ENCODE measurements at regions of chr11 and their contacts with region 1.

Region 1: GRCh38 chr11:3091791-3092602 is 34.8 kb upstream of the CARS1 start:
- DNase-seq: peak; percentile 60
- H3K4me3 Mint-ChIP-seq: no peak overlapping the region
- H3K27ac Mint-ChIP-seq: no peak overlapping the region
- H3K4me1 Mint-ChIP-seq: no peaks in the 10 kb centered on the region
- H3K27me3 Mint-ChIP-seq: no peaks in the 10 kb centered on the region

Region 2: DNA sequence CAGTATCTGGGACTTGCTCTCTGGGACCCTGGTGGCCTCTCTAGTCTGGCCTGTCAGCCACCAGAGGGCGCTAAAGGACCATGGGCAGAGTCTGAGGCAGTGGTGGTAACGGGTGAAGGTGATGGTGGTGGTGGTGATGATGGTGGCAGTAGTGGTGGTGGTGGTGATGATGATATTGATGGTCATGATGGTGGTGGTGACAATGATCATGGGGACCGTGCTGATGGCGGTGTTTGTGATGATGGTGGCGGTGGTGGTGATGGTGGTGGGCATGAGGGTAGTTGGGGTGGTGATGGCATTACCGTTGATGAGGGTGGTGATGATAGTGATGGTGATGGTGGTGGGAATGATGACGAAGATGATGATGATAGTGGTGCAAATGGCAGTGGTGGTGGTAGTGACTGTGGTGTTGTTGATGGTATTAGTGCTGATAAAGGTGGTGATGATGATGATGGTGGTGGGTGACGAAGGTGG is 663.6 kb before region 1 on chr11:
- intact Hi-C with region 1: loop called (anchors 5 kb)
- DNase-seq: peak; percentile 67
- H3K4me3 Mint-ChIP-seq: no peak overlapping the region
- H3K27ac Mint-ChIP-seq: no peak overlapping the region
- H3K4me1 Mint-ChIP-seq: no peaks in the 10 kb centered on the region
- H3K27me3 Mint-ChIP-seq: no peaks in the 10 kb centered on the region

Region 3: DNA sequence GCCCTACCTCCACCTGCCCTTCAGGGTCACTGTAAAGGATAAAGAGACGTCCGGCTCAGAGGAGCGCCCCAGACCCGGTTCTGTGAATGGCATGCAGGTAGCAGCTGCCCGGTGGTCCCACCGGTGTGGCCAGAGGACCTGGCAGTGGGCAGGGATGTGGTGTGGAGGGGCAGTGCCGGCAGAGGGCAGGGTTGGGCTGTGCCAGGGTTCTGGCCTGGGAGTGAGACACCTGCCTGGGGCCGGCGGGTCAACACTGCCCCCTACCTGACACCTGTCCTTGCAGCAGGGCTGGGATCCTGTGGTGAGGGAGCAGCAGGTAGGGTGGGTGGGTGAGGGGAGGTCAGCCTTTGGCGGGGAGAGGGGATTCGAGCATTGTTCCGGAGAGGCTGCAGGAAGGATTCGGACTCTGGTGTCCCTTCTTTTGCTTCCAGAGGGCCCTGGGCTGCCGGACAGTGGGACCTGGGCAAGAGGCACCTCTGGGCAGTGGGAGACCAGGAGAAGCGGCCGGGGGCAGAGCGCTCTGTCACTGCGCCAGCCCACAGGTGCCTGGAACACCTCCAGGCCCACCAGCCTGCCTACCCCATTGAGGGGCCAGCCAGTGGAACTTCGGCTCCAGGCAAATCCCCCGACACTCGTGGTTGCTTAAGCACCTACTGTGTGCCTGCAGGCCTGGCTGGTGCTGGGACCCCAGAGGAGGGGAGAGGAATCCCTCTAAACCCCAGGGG is 161.1 kb before region 1 on chr11:
- intact Hi-C with region 1: loop called (anchors 2 kb)
- DNase-seq: no peak
- H3K4me3 Mint-ChIP-seq: peak overlapping the region; percentile 78
- H3K27ac Mint-ChIP-seq: peak overlapping the region; percentile 77
- H3K4me1 Mint-ChIP-seq: peaks cover 15% of the 10 kb centered on the region
- H3K27me3 Mint-ChIP-seq: peaks cover 12% of the 10 kb centered on the region

Region 4: GRCh38 chr11:2975594-2975993 is 116.4 kb before region 1 on chr11:
- intact Hi-C with region 1: loop called (anchors 1 kb)
- DNase-seq: peak; percentile 14
- H3K4me3 Mint-ChIP-seq: no peak overlapping the region
- H3K27ac Mint-ChIP-seq: no peak overlapping the region
- H3K4me1 Mint-ChIP-seq: peaks cover 29% of the 10 kb centered on the region
- H3K27me3 Mint-ChIP-seq: no peaks in the 10 kb centered on the region

Region 5: DNA sequence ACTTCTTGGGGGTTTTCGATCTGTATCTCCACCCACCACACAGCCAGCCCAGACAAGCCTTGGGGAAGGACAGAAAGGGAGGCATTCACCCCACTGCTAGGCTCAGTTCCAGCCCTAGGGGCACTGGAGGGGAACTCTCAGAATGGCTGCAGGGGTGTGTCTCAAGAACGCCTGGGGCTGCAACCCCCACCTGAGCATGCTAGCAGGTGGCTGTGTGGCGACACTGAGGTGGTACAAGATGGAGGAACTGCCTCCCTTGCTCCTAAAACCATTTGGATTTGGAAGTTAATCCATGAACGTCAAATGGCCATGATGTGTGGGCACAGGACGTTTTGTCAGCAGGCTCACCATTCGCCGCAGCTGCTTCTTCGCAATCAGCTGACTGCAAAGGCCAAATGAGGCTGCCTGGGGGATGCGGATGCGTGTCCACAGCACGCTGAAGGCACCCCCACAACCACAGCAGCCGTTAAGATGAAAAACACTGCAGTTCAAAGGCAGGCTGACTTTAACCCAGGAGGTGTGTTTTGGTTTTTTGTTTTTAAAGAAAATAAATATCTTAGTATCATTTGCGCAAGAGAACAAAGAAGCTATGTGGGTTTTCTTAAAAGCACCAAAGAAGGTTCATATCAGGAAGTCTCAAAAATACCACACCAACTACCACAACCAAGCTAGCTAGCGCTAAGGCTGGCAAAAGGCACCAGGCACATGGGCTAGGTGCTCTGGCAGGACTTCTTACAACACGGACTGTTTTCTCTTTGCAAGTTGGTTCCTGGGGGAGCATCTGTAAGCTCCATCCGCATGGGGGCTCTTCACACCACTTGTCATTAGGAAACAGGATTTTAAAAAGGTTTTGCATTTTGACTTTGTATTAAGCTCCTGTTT is 77.7 kb before region 1 on chr11:
- intact Hi-C with region 1: no loop called
- DNase-seq: peak; percentile 72
- H3K4me3 Mint-ChIP-seq: peak overlapping the region; percentile 63
- H3K27ac Mint-ChIP-seq: peak overlapping the region; percentile 90
- H3K4me1 Mint-ChIP-seq: peaks cover 41% of the 10 kb centered on the region
- H3K27me3 Mint-ChIP-seq: no peaks in the 10 kb centered on the region

Region 6: GRCh38 chr11:3037040-3037944 is 54.7 kb before region 1 on chr11:
- intact Hi-C with region 1: loop called (anchors 1 kb)
- DNase-seq: peak; percentile 26
- H3K4me3 Mint-ChIP-seq: no peak overlapping the region
- H3K27ac Mint-ChIP-seq: peak overlapping the region; percentile 14
- H3K4me1 Mint-ChIP-seq: no peaks in the 10 kb centered on the region
- H3K27me3 Mint-ChIP-seq: no peaks in the 10 kb centered on the region

Region 7: GRCh38 chr11:3189196-3189843 is 97.3 kb after region 1 on chr11:
- intact Hi-C with region 1: no loop called
- DNase-seq: no peak
- H3K4me3 Mint-ChIP-seq: no peak overlapping the region
- H3K27ac Mint-ChIP-seq: no peak overlapping the region
- H3K4me1 Mint-ChIP-seq: no peaks in the 10 kb centered on the region
- H3K27me3 Mint-ChIP-seq: peaks cover 2% of the 10 kb centered on the region

Region 8: GRCh38 chr11:4523666-4524065 is 1431.7 kb after region 1 on chr11:
- intact Hi-C with region 1: no loop called
- DNase-seq: no peak
- H3K4me3 Mint-ChIP-seq: no peak overlapping the region
- H3K27ac Mint-ChIP-seq: no peak overlapping the region
- H3K4me1 Mint-ChIP-seq: no peaks in the 10 kb centered on the region
- H3K27me3 Mint-ChIP-seq: peaks cover 8% of the 10 kb centered on the region

Measured in activated T-helper 1 cell treated with anti-CD3 and anti-CD28 coated beads, Interleukin-12 subunit alpha, Interleukin-12 subunit beta, Interleukin-2, Interleukin-4 antibody, amounts not matched to agents 30 ng/mL and 10 ng/mL and 1 ng/mL, durations not matched to agents 14 hours and 24 hours and 36 hours (primary cell).